ENCODE measurements at regions of chr7 and their contacts with region 1.

Region 1: GRCh38 chr7:42886129-42886528 is 25.7 kb downstream of the C7orf25 start:
- DNase-seq: no peak
- H3K4me3 Mint-ChIP-seq: no peak overlapping the region
- H3K27ac Mint-ChIP-seq: no peak overlapping the region
- H3K4me1 Mint-ChIP-seq: peaks cover 18% of the 10 kb centered on the region
- H3K27me3 Mint-ChIP-seq: no peaks in the 10 kb centered on the region

Region 2: DNA sequence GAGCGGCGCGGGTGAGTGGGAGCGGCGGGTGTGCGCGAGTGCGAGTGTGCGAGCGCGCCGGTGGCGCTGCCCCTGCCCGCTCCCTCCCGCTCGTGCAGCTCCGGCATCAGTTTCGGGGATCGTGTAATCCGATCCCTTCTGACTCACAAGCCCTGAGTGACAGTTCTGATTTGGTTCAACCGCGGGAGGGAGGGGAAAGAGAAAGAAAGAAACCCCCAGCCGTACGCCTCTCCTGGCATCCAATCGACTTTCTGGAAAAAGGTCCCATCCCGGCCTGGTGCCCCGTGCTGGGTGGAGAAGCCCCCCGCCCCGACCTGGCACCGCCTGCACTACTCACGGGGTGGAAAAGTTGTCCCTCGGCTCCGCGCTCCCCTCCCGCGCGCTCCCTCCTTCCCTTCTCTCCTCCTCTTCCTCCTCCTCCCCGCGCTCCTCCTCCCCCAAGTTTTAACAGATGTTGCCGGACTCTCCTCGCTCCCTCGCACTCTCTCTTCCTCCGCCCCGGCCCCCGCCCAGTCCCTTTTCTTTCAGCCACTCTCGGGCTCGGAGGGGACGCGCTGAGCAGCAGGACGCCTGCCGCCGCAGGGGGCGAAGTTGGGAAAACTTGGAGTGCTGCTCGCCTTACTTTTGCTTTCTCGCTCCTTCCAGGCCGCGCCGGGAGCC is 648.8 kb before region 1 on chr7 and contains the start of gene GLI3:
- CTCF ChIA-PET with region 1: no interaction called
- intact Hi-C with region 1: loop called (anchors 5 kb)
- DNase-seq: peak; percentile 64
- H3K4me3 Mint-ChIP-seq: peak within 1 kb of the TSS; percentile 75
- H3K27ac Mint-ChIP-seq: no peak within 1 kb of the TSS
- H3K4me1 Mint-ChIP-seq: peaks cover 7% of the 10 kb centered on the region
- H3K27me3 Mint-ChIP-seq: peaks cover 66% of the 10 kb centered on the region
- total RNA-seq, gene GLI3: 0.24 to 0.32 TPM

Region 3: GRCh38 chr7:42639929-42640328 is 246.2 kb before region 1 on chr7:
- CTCF ChIA-PET with region 1: no interaction called
- intact Hi-C with region 1: no loop called
- DNase-seq: no peak
- H3K4me3 Mint-ChIP-seq: no peak overlapping the region
- H3K27ac Mint-ChIP-seq: no peak overlapping the region
- H3K4me1 Mint-ChIP-seq: no peaks in the 10 kb centered on the region
- H3K27me3 Mint-ChIP-seq: peaks cover 7% of the 10 kb centered on the region

Region 4: DNA sequence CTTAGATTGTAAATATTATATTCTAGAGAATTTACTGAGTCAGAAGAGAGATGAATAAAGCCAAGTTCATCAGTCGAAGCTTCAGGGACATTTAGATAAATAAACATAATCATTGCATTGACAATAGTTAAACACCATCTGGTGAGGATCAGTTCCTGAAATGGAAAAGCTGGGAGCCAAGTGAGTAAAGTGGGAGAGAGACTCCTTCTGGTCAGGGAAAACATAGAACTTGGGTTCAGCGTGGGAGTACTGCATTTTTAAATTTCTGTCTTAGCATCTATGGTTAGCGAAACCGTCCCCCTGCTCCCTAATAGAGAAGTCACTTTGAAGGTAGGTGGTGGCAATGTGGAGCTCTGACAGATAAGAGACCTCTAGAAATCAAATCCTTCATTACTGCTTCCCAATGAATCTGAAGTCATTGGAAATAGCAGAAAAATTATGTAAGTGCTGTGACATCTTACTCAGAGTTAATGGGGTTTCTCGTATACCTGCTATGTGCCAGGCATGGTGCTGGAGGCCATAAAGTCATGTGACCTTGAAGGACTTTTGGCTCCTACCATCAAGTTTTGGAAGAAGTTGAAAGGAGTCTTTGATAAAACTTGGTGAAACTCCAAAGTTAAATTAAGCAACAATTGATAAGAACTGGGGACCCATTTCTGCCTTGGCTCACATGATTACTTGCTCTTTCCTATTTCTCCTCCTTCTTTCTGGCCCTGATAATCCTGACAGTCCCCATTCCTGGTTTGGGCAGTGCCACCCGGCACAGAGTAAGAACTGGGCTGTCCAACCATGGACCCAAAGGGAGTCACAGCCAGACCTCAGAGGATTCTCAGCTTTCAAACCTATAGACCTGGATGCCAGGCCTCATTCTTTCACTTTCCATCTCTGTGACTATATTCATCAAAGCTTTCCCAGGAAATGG is 185.5 kb before region 1 on chr7:
- CTCF ChIA-PET with region 1: no interaction called
- intact Hi-C with region 1: no loop called
- DNase-seq: no peak
- H3K4me3 Mint-ChIP-seq: no peak overlapping the region
- H3K27ac Mint-ChIP-seq: no peak overlapping the region
- H3K4me1 Mint-ChIP-seq: no peaks in the 10 kb centered on the region
- H3K27me3 Mint-ChIP-seq: no peaks in the 10 kb centered on the region

Region 5: GRCh38 chr7:42812779-42813178 is 73.3 kb before region 1 on chr7:
- CTCF ChIA-PET with region 1: no interaction called
- intact Hi-C with region 1: no loop called
- DNase-seq: no peak
- H3K4me3 Mint-ChIP-seq: no peak overlapping the region
- H3K27ac Mint-ChIP-seq: no peak overlapping the region
- H3K4me1 Mint-ChIP-seq: no peaks in the 10 kb centered on the region
- H3K27me3 Mint-ChIP-seq: peaks cover 11% of the 10 kb centered on the region

Region 6: DNA sequence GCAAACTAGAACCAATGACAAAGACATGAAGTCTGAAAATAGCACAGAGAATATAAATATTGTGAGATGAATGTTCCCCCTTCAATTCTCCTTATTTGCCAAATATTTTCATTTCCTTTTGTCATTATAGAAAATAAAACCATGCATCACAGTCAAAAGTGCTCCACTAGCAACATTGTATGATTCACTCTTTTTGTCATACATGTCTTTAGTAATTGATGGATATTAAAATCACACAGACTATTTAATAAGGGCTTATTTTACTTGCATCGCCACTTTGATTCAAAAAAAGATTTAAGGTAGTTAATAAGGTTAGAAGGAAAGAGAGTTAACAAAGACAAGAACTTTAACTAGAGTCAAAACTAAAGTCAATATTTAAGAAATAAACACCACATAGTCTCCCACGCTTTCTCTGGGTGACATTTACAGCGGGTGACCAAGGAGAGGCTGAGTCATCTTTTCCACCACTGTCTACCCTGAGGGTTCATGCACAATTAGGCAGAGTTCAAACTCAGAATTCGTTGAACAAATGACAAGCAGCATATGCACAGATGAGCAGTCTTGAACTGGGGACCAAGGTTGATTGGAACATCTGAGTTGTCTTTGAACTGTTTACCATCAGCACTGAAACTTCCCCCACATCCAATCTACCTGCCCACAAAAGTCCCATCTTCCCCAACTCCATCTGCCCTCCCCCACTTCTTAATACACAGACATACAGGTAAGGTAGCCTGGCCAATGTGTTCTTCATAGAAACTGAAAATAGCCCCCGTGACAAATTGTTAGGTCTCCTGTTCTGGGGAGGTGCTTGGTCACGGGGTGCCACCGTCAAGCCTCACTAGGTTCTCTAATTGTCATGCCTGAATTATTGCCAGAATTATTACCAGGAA is 16.8 kb before region 1 on chr7:
- CTCF ChIA-PET with region 1: no interaction called
- intact Hi-C with region 1: loop called (anchors 1 kb)
- DNase-seq: peak; percentile 63
- H3K4me3 Mint-ChIP-seq: no peak overlapping the region
- H3K27ac Mint-ChIP-seq: peak overlapping the region; percentile 68
- H3K4me1 Mint-ChIP-seq: peaks cover 16% of the 10 kb centered on the region
- H3K27me3 Mint-ChIP-seq: peaks cover 10% of the 10 kb centered on the region

Region 7: DNA sequence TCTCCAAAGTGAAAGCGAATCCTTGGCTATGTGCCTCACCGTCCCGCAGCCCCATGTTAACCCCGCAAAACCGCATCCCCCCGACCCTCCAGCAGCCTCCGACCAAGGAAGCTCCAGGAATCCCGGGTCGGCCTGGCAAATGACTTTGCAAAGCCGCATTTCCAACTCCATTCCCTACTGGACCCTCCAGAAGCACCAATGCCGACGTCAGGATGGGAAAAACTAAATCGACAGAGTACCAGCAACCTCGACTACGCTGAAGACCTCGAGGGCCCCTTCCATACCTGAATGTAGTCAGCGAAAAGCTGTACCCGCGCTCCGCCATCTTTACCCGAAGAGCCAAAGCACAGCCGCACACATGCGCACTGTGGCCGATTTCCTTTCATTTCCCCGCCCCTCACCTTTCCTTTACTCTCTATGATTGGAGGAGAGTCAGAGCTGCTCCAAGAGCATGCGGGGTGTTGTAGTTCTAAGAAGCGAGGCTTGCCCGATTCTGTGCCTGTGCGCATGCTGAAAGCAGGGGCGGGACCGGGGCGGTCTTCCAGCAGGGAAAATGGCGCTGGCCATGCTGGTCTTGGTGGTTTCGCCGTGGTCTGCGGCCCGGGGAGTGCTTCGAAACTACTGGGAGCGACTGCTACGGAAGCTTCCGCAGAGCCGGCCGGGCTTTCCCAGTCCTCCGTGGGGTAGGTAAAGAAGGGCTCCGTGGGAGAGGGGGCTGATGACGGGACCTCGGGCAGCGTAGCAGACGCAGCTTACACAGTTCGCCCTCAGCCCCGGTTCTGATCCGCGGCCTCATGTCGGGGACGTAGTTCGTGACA is 45.9 kb after region 1 on chr7 and contains the starts of genes MRPL32 and PSMA2:
- CTCF ChIA-PET with region 1: no interaction called
- intact Hi-C with region 1: loop called (anchors 1 kb)
- DNase-seq: peak; percentile 95
- H3K4me3 Mint-ChIP-seq: peak within 1 kb of the TSS; percentile 100
- H3K27ac Mint-ChIP-seq: peak within 1 kb of the TSS; percentile 100
- H3K4me1 Mint-ChIP-seq: peaks cover 60% of the 10 kb centered on the region
- H3K27me3 Mint-ChIP-seq: no peaks in the 10 kb centered on the region
- total RNA-seq, gene MRPL32: 67.4 to 71.8 TPM
- total RNA-seq, gene PSMA2: 199 to 221 TPM